ENCODE measurements at regions of chr4 and their contacts with region 1.

Region 1: DNA sequence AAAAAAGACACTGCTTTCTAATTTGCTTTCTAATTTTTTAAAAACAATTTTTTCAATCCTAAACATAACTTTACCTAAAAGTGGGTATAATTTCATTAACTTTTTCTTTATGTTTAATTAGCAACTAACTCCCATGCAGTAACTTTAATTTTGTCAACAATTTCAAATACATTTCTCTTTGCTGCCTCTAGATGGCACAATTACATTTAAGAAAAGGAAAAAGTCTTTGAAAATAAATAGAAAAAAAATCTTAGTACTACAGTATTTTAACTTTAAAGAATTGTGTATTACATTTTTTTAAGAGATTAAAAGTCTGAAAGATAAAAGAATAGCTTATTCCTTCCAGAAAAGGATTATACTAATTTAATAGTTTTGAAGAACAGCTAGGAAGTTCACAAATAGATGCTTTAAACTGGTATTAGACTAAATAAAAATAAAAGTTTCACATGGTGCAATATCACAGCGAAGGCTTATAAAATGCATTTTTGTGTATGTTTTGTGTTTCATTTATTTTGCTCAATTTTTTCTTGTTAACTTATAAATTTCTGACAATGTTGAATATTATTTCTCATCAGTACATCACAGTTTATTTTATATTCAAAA is 105.1 kb downstream of the ADGRA3 start:
- DNase-seq: no peak
- ATAC-seq: no peak
- H3K4me3 ChIP-seq: no peak overlapping the region
- H3K27ac ChIP-seq: no peak overlapping the region
- H3K4me1 ChIP-seq: no peaks in the 10 kb centered on the region
- H3K27me3 ChIP-seq: no peaks in the 10 kb centered on the region
- CTCF ChIP-seq: peak in 2 of 3 experiments; percentile 10 to 46; a peak in 3 of 6 replicates
- EP300 ChIP-seq: no peak
- POLR2A ChIP-seq: no peak
- RAD21 ChIP-seq: peak; percentile 46 to 53

Region 2: GRCh38 chr4:22115262-22115661 is 295.5 kb before region 1 on chr4:
- CTCF ChIA-PET with region 1: no interaction called
- POLR2A ChIA-PET with region 1: no interaction called
- in situ Hi-C with region 1: no loop called
- intact Hi-C with region 1: no loop called
- DNase-seq: no peak
- ATAC-seq: no peak
- H3K4me3 ChIP-seq: no peak overlapping the region
- H3K27ac ChIP-seq: no peak overlapping the region
- H3K4me1 ChIP-seq: no peaks in the 10 kb centered on the region
- H3K27me3 ChIP-seq: no peaks in the 10 kb centered on the region
- CTCF ChIP-seq: no peak
- EP300 ChIP-seq: no peak
- POLR2A ChIP-seq: no peak
- RAD21 ChIP-seq: no peak

Region 3: GRCh38 chr4:22688236-22688635 is 277.5 kb after region 1 on chr4:
- CTCF ChIA-PET with region 1: interaction called, 5 read pairs
- POLR2A ChIA-PET with region 1: no interaction called
- in situ Hi-C with region 1: loop called (anchors 10 kb)
- intact Hi-C with region 1: loop called (anchors 1 kb)
- DNase-seq: no peak
- ATAC-seq: no peak
- H3K4me3 ChIP-seq: no peak overlapping the region
- H3K27ac ChIP-seq: no peak overlapping the region
- H3K4me1 ChIP-seq: no peaks in the 10 kb centered on the region
- H3K27me3 ChIP-seq: no peaks in the 10 kb centered on the region
- CTCF ChIP-seq: no peak
- EP300 ChIP-seq: no peak
- POLR2A ChIP-seq: no peak
- RAD21 ChIP-seq: no peak

Region 4: DNA sequence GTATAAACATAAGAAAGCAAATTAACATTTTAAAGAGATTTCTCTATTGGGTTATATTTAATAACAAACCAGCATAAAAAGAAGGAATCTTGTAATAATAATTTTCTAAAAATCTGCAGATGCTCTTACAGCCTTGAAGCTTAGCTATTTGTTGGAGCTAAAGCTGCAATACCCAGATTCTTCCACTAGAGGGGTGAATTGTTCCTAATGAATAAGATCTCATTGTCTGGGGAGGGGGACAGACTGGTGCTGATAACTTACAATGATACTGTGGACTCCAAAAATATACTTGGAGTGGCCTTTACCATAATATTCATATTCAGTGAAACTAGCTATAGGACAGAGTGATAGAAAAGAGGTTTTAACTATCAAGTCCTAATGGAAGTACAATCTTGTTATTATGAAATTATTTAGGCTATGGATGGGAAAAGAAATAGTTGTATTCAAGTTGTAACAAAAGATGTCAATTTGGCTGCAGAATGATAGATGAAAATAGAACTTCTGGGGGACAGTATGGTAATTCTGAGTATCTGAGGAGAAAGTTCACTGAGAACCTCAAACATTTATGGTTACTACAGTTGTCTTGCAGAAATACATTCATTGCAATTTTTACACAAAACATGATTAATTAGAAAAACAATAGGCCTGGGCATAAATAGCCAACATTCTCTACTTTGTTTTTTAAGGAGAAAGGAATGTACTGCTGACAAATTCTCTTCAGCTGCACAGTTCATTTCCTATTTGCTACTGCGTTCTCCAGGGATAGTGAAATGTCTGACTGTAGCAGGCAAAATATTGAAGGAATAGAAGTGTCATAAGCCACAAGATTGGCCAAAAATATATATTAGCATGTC is 725.3 kb after region 1 on chr4:
- CTCF ChIA-PET with region 1: no interaction called
- POLR2A ChIA-PET with region 1: no interaction called
- in situ Hi-C with region 1: no loop called
- intact Hi-C with region 1: loop called (anchors 10 kb)
- DNase-seq: peak; percentile 21 to 60 (median 56)
- ATAC-seq: peak; percentile 63; the same call in 1 of the 3 replicates
- H3K4me3 ChIP-seq: no peak overlapping the region
- H3K27ac ChIP-seq: no peak overlapping the region
- H3K4me1 ChIP-seq: no peaks in the 10 kb centered on the region
- H3K27me3 ChIP-seq: no peaks in the 10 kb centered on the region
- CTCF ChIP-seq: peak in 2 of 3 experiments; percentile 57 to 59; a peak in 4 of 6 replicates
- EP300 ChIP-seq: no peak
- POLR2A ChIP-seq: no peak
- RAD21 ChIP-seq: peak in 1 of 2 experiments; percentile 52; a peak in 3 of 4 replicates